Heart right ventricle (tissue), 16 donors: ENCODE measurements at regions of chr2 and their contacts with region 1.

Region 1: DNA sequence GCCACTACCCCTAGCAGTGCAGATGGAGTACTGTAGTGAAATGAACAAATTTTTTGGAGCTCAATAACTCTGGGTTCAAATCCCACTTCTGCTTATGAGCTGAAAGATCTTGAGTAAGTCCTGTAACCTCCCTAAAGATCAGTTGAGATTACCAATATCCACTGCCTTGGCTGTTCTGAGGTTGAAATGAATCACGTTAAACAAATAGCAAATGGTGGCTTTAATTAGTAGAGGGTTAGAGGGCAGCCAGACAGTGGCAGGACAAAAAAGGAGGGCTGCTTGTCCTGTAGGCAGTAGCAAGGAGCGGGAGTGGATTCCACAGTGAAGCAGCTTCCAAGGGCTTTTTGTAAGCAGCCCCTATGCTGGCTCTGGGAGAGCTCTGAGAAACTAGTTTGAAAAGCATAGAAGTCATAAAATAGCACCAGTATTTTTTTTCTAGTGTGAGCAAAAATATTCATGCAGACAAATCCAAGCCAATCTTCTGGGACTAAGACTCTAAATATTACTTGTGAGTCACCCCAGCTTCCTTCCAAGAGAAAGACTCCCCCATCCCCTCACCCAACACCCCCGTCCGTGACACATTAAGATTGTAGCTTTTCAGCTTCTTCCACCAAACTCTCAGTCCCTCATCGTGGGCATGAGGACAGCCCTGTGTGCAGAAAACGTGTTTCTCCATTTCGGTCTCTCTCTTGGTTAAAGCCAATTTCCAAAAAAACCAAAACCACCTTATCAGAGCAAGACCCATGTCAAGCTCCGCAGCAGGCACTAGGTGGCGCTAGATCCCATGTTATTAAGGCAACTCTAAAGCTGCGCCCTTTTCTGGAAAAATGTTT is 123.5 kb upstream of the LGALSL start:
- DNase-seq: peak; percentile 71 to 86
- ATAC-seq: peak; percentile 58 to 82 (median 74)
- H3K4me3 ChIP-seq: peak overlapping the region in 6 of 10 donors; percentile 16 to 32 (median 24)
- H3K27ac ChIP-seq: peak overlapping the region; percentile 58 to 85 (median 77)
- H3K4me1 ChIP-seq: peaks cover 15 to 49% (median 40%) of the 10 kb centered on the region in 9 donors
- H3K27me3 ChIP-seq: no peaks in the 10 kb centered on the region
- CTCF ChIP-seq: peak; percentile 86 to 95 (median 90)

Region 2: GRCh38 chr2:64144057-64145013 is 186.2 kb before region 1 on chr2 and contains the start of gene PELI1:
- intact Hi-C with region 1: loop called in 2 of 10 experiments (anchors 5 kb)
- DNase-seq: peak; percentile 94 to 96
- ATAC-seq: peak; percentile 98 to 100 (median 99)
- H3K4me3 ChIP-seq: peak within 1 kb of the TSS; percentile 78 to 99 (median 95)
- H3K27ac ChIP-seq: peak within 1 kb of the TSS; percentile 96 to 99 (median 98)
- H3K4me1 ChIP-seq: peaks cover 0 to 39% (median 18%) of the 10 kb centered on the region in 9 donors
- H3K27me3 ChIP-seq: no peaks in the 10 kb centered on the region
- CTCF ChIP-seq: peak in 7 of 9 donors; percentile 9 to 56 (median 42)
- total RNA-seq, gene PELI1: 6.3 to 15.6 (median 8.6) TPM

Region 3: DNA sequence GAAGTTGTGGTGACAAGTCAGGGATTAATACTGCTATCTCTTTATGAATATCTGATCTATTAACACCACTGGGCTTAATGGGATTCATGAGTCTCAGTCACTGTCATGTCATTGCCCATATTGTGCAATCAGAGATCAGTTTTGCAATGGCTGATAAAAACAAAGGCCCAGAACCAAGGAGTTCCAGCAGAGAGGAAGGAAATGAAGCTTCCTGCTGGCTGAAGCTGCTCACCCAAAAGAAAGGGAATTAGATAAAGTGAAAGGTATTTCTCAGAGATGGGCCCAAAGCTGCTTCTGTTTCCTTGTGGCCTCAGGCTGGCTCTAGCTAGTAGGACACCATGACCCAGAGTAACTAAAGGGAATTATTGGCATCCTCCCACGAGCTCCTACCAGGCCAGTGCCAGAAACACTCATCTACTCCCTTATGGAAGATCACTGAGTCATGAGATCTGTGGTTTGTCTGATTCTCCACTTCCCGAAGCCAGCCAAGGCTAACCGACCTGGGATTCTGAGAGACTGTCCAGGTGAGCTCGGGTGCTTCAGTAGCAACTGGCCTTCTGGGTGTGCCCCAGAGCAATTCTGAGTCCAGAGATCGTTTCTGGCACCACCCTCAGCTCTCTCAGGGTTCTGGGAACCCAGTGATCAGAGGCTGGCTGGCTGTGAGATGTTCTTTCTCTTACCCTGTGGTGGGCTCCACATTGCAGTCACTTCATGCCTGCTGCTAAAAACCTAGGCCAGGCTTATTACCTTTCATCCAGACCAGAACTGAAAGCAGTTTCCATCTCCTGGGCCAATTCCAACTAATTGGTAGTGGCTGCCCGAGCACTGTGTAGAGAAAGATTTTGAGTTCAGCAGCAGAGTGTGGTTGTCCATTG is 56.7 kb before region 1 on chr2:
- intact Hi-C with region 1: loop called in 1 of 10 experiments (anchors 5 kb)
- DNase-seq: peak in 1 of 2 donors; percentile 40
- ATAC-seq: peak; percentile 83 to 94 (median 90)
- H3K4me3 ChIP-seq: peak overlapping the region in 4 of 10 donors; percentile 2 to 19 (median 14)
- H3K27ac ChIP-seq: peak overlapping the region; percentile 22 to 89 (median 74)
- H3K4me1 ChIP-seq: peaks cover 6 to 50% (median 28%) of the 10 kb centered on the region in 9 donors
- H3K27me3 ChIP-seq: no peaks in the 10 kb centered on the region
- CTCF ChIP-seq: no peak

Region 4: GRCh38 chr2:64562148-64562784 is 231.8 kb after region 1 on chr2:
- intact Hi-C with region 1: loop called (anchors 2 to 10 kb)
- DNase-seq: no peak
- ATAC-seq: peak in 4 of 8 donors; percentile 52 to 58 (median 54)
- H3K4me3 ChIP-seq: no peak overlapping the region
- H3K27ac ChIP-seq: no peak overlapping the region
- H3K4me1 ChIP-seq: peaks cover 0 to 27% (median 7%) of the 10 kb centered on the region in 9 donors
- H3K27me3 ChIP-seq: no peaks in the 10 kb centered on the region
- CTCF ChIP-seq: peak; percentile 20 to 65 (median 41)

Region 5: GRCh38 chr2:64635976-64636911 is 305.7 kb after region 1 on chr2:
- intact Hi-C with region 1: no loop called
- DNase-seq: no peak
- ATAC-seq: peak in 4 of 8 donors; percentile 12 to 50 (median 34)
- H3K4me3 ChIP-seq: no peak overlapping the region
- H3K27ac ChIP-seq: peak overlapping the region in 1 of 10 donors; percentile 33
- H3K4me1 ChIP-seq: peaks cover 0 to 68% (median 28%) of the 10 kb centered on the region in 9 donors
- H3K27me3 ChIP-seq: no peaks in the 10 kb centered on the region
- CTCF ChIP-seq: no peak

Region 6: GRCh38 chr2:64865073-64865830 is 534.8 kb after region 1 on chr2:
- intact Hi-C with region 1: loop called in 7 of 10 experiments (anchors 5 to 10 kb)
- DNase-seq: peak; percentile 53 to 68
- ATAC-seq: peak; percentile 75 to 93 (median 87)
- H3K4me3 ChIP-seq: peak overlapping the region; percentile 51 to 99 (median 79)
- H3K27ac ChIP-seq: peak overlapping the region; percentile 78 to 97 (median 91)
- H3K4me1 ChIP-seq: peaks cover 0 to 60% (median 8%) of the 10 kb centered on the region in 9 donors
- H3K27me3 ChIP-seq: no peaks in the 10 kb centered on the region
- CTCF ChIP-seq: peak in 8 of 9 donors; percentile 50 to 99 (median 67)

Region 7: GRCh38 chr2:65789923-65790675 is 1459.6 kb after region 1 on chr2:
- intact Hi-C with region 1: no loop called
- DNase-seq: no peak
- ATAC-seq: no peak
- H3K4me3 ChIP-seq: no peak overlapping the region
- H3K27ac ChIP-seq: no peak overlapping the region
- H3K4me1 ChIP-seq: no peaks in the 10 kb centered on the region
- H3K27me3 ChIP-seq: peaks cover 0 to 10% (median 0%) of the 10 kb centered on the region in 7 donors
- CTCF ChIP-seq: no peak